CD14-positive monocyte (primary cell): ENCODE measurements at regions of chr3 and their contacts with region 1.

Region 1: GRCh38 chr3:187164885-187165543 is 25.7 kb upstream of the RPL39L start:
- DNase-seq: peak; percentile 25 to 62 (median 49)
- H3K4me3 ChIP-seq: no peak overlapping the region
- H3K4me3 Mint-ChIP-seq: no peak overlapping the region
- H3K27ac ChIP-seq: no peak overlapping the region
- H3K27ac Mint-ChIP-seq: no peak overlapping the region
- H3K4me1 ChIP-seq: no peaks in the 10 kb centered on the region
- H3K4me1 Mint-ChIP-seq: peaks cover under 1% of the 10 kb centered on the region
- H3K27me3 ChIP-seq: no peaks in the 10 kb centered on the region
- H3K27me3 Mint-ChIP-seq: peaks cover 0 to 6% (median 6%) of the 10 kb centered on the region in 3 donors
- CTCF ChIP-seq: peak; percentile 82

Region 2: DNA sequence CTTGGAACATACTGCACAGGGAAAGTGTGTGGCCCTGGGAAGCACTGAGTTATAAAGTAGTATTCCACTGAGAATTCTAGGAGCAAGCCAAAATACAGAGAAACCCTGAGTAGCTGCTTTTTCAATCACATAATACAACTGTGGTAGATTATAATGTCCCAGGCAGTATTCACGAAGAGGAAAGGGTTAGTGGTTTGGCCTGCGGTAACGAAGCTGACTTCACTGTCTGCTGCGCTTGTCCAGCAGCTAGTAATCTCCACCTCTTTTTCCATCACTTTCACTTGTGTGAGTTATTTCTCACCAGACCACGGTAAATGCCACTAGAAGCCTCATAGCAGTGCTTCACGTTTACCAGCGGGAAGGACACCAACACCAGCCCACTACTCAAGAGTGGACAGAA is 60.1 kb before region 1 on chr3:
- intact Hi-C with region 1: loop called in 1 of 2 experiments (anchors 5 kb)
- DNase-seq: no peak
- H3K4me3 ChIP-seq: no peak overlapping the region
- H3K4me3 Mint-ChIP-seq: peak overlapping the region in 1 of 2 donors; percentile 25
- H3K27ac ChIP-seq: no peak overlapping the region
- H3K27ac Mint-ChIP-seq: no peak overlapping the region
- H3K4me1 ChIP-seq: peaks cover 5 to 9% of the 10 kb centered on the region in 2 donors
- H3K4me1 Mint-ChIP-seq: peaks cover 12% of the 10 kb centered on the region
- H3K27me3 ChIP-seq: no peaks in the 10 kb centered on the region
- H3K27me3 Mint-ChIP-seq: no peaks in the 10 kb centered on the region
- CTCF ChIP-seq: no peak